ENCODE measurements at regions of chr15 and their contacts with region 1.

Region 1: GRCh38 chr15:81265944-81266775 is 57.8 kb downstream of the STARD5 start:
- DNase-seq: peak; percentile 64
- ATAC-seq: peak; percentile 92
- H3K4me3 Mint-ChIP-seq: peak overlapping the region; percentile 69
- H3K27ac Mint-ChIP-seq: no peak overlapping the region
- H3K4me1 Mint-ChIP-seq: peaks cover 19% of the 10 kb centered on the region
- H3K27me3 Mint-ChIP-seq: no peaks in the 10 kb centered on the region
- CTCF ChIP-seq: no peak

Region 2: DNA sequence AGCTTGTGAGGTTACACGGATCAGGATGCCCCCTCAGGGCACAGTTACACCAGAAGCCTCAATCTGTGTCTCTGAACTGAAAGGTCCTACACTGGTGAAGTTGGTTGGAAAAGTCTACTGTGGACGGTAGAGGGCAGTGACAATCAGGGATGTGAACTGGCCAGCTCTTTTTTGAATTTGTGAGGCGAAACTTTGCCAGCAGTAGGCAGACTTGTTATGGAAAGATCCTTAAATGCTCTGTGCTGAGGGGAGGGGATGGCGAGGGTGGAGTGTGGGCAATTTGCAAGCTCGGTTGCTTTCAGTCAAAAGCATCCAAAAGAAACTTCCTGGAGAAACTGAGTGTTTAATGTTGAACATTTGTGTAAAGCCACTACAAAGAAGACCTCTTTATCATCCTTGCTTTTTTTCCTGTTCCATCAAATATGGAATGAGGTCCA is 698.4 kb before region 1 on chr15:
- CTCF ChIA-PET with region 1: interaction called, 6 read pairs
- POLR2A ChIA-PET with region 1: no interaction called
- intact Hi-C with region 1: loop called (anchors 1 kb)
- DNase-seq: no peak
- ATAC-seq: no peak
- H3K4me3 Mint-ChIP-seq: no peak overlapping the region
- H3K27ac Mint-ChIP-seq: no peak overlapping the region
- H3K4me1 Mint-ChIP-seq: no peaks in the 10 kb centered on the region
- H3K27me3 Mint-ChIP-seq: peaks cover 13% of the 10 kb centered on the region
- CTCF ChIP-seq: no peak

Region 3: DNA sequence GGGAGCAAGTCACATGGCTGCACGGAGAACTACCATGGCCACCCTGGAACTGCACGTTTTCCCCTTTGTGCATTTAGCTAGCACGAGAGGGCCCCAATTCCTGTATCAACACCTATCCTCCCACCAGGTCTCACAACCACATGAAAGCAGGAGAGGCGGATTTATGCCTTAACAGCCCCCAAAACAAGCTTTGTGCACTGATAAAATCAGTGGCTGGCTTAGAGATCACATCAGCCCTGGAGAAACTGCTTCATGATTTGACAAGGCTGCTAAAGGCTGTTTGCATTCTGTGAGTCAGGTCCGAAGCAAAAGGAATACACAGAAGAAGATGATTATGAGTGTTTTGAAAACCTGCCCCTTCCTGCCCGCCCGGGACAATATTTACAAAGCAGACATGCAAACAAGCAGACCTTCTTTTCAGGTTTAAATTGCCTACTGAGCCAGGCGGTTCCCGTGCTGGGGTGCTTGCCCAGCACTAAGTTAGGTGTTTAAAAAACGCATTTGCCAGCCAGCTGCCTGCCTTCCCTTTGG is 461.1 kb before region 1 on chr15:
- CTCF ChIA-PET with region 1: no interaction called
- POLR2A ChIA-PET with region 1: no interaction called
- intact Hi-C with region 1: no loop called
- DNase-seq: no peak
- ATAC-seq: no peak
- H3K4me3 Mint-ChIP-seq: no peak overlapping the region
- H3K27ac Mint-ChIP-seq: no peak overlapping the region
- H3K4me1 Mint-ChIP-seq: no peaks in the 10 kb centered on the region
- H3K27me3 Mint-ChIP-seq: peaks cover 4% of the 10 kb centered on the region
- CTCF ChIP-seq: no peak

Region 4: GRCh38 chr15:80977627-80978036 is 288.5 kb before region 1 on chr15:
- CTCF ChIA-PET with region 1: interaction called, 33 read pairs
- POLR2A ChIA-PET with region 1: interaction called, 4 read pairs
- intact Hi-C with region 1: loop called (anchors 1 kb)
- DNase-seq: peak; percentile 22
- ATAC-seq: peak; percentile 65
- H3K4me3 Mint-ChIP-seq: no peak overlapping the region
- H3K27ac Mint-ChIP-seq: peak overlapping the region; percentile 51
- H3K4me1 Mint-ChIP-seq: peaks cover 29% of the 10 kb centered on the region
- H3K27me3 Mint-ChIP-seq: no peaks in the 10 kb centered on the region
- CTCF ChIP-seq: no peak

Region 5: GRCh38 chr15:81111510-81112470 is 154.4 kb before region 1 on chr15:
- CTCF ChIA-PET with region 1: interaction called, 319 read pairs
- POLR2A ChIA-PET with region 1: interaction called, 12 read pairs
- intact Hi-C with region 1: loop called (anchors 1 kb)
- DNase-seq: no peak
- ATAC-seq: peak; percentile 91
- H3K4me3 Mint-ChIP-seq: peak overlapping the region; percentile 56
- H3K27ac Mint-ChIP-seq: peak overlapping the region; percentile 72
- H3K4me1 Mint-ChIP-seq: peaks cover 16% of the 10 kb centered on the region
- H3K27me3 Mint-ChIP-seq: peaks cover 9% of the 10 kb centered on the region
- CTCF ChIP-seq: no peak

Region 6: DNA sequence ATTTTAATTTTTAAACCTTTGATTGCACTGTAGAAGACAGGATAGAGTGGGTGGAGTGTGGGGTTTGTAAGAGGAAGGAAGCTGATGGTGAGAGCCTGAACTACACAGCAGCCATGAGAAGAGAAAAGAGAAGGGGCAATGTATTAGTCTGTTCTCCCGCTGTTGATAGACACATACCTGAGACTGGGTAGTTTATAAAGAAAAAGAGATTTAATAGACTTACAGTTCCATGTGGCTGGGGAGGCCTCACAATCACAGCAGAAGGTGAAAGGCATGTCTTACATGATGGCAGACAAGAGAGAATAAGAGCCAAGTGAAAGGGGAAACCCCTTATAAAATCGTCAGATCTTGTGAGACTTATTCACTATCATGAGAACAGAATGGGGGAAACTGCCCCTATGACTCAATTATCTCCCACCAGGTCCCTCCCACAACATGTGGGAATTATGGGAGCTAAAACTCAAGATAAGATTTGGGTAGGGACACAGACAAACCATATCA is 20.5 kb after region 1 on chr15:
- CTCF ChIA-PET with region 1: interaction called, 22 read pairs
- POLR2A ChIA-PET with region 1: interaction called, 20 read pairs
- intact Hi-C with region 1: no loop called
- DNase-seq: no peak
- ATAC-seq: peak; percentile 80
- H3K4me3 Mint-ChIP-seq: peak overlapping the region; percentile 80
- H3K27ac Mint-ChIP-seq: peak overlapping the region; percentile 96
- H3K4me1 Mint-ChIP-seq: peaks cover 76% of the 10 kb centered on the region
- H3K27me3 Mint-ChIP-seq: no peaks in the 10 kb centered on the region
- CTCF ChIP-seq: no peak

Region 7: GRCh38 chr15:81379269-81379668 is 113.1 kb after region 1 on chr15:
- CTCF ChIA-PET with region 1: interaction called, 14 read pairs
- POLR2A ChIA-PET with region 1: no interaction called
- intact Hi-C with region 1: no loop called
- DNase-seq: no peak
- ATAC-seq: no peak
- H3K4me3 Mint-ChIP-seq: no peak overlapping the region
- H3K27ac Mint-ChIP-seq: no peak overlapping the region
- H3K4me1 Mint-ChIP-seq: no peaks in the 10 kb centered on the region
- H3K27me3 Mint-ChIP-seq: peaks cover 2% of the 10 kb centered on the region
- CTCF ChIP-seq: no peak

Region 8: DNA sequence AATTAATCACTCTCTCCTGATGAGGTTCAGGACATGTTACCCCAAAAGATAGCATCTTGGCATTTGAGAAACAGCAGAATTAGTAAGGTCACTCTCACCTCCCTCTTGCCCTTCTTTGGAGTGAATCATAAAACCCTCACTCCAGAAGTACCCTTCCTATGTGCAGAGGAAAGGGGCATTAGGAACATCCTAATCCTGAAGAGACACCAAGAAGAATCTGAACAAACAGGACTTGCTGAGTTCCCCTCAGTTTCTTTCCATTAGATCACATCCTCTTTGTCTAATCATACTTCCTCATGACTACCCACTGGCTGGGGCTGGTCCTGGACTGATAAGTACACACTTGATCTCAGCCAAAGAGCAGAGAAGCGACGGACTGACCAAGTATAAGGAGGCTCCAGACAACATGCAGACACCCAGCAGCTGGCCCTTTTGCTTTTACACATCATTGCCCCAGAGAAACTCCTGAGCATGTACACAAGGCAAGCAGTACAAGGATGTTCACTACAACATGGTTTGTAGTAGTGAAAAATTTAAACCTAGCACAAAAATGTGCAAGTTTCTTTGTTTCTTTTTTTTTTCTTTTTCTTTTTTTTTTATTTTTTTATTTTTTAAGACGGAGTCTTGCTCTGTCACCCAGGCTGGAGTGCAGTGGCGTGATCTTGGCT is 1826.3 kb after region 1 on chr15:
- CTCF ChIA-PET with region 1: no interaction called
- POLR2A ChIA-PET with region 1: no interaction called
- intact Hi-C with region 1: no loop called
- DNase-seq: no peak
- ATAC-seq: peak; percentile 91
- H3K4me3 Mint-ChIP-seq: peak overlapping the region; percentile 50
- H3K27ac Mint-ChIP-seq: peak overlapping the region; percentile 86
- H3K4me1 Mint-ChIP-seq: peaks cover 15% of the 10 kb centered on the region
- H3K27me3 Mint-ChIP-seq: peaks cover 11% of the 10 kb centered on the region
- CTCF ChIP-seq: no peak

Measured in activated B cell treated with CpG ODN at 0.5 μM for 24 hours (primary cell).